ENCODE measurements at regions of chr6 and their contacts with region 1.

Region 1: DNA sequence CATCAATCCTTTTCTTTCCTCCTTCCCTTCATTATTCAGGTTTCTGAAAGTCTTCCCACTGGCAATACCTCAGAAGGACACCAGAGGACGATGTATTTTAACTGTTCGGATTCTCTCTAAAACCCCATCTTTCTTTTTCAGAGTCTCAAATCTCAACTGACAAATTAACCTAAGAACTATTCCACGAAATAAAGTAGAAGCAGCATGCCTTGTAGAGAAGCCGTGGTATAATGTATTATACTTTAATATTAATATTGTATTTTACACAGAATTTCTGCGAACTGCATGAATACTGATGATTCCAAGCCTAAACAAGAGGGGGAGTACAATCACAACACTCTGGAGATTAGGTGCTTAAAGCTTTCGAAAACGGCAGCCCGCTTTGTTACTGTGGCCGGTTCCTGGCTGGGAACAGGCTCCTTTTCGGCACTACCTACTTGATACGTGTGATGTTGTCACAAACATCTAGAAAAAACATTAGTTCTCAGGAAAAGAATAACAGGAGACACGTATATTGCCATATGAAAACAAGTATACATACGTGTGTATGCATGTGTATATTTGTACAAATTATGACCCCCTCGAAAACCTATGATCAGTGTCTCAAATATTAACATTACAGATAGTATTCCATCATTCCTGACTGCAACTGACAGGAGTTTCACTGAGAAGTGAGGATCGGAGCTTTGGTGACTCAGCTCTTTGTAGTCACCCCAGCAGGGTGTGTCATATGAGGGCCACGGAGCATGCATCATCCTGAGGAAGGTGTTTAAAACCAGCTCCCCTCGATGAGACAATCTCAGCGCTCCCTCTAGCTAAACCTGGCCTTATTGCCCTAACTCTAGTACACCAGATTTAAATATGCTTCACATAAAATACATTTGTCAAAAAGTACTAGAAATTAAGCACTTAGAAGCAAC is 319.7 kb upstream of the TCF21 start:
- DNase-seq: peak; percentile 51
- ATAC-seq: peak; percentile 93
- H3K4me3 ChIP-seq: peak overlapping the region in 2 of 3 experiments; percentile 43 to 45; a peak in 4 of 6 replicates
- H3K27ac ChIP-seq: no peak overlapping the region
- H3K4me1 ChIP-seq: peaks cover 8% of the 10 kb centered on the region
- H3K27me3 ChIP-seq: no peaks in the 10 kb centered on the region
- CTCF ChIP-seq: peak; percentile 63
- EP300 ChIP-seq: no peak
- POLR2A ChIP-seq: no peak
- RAD21 ChIP-seq: peak; percentile 38; the same call in 1 of the 2 replicates

Region 2: DNA sequence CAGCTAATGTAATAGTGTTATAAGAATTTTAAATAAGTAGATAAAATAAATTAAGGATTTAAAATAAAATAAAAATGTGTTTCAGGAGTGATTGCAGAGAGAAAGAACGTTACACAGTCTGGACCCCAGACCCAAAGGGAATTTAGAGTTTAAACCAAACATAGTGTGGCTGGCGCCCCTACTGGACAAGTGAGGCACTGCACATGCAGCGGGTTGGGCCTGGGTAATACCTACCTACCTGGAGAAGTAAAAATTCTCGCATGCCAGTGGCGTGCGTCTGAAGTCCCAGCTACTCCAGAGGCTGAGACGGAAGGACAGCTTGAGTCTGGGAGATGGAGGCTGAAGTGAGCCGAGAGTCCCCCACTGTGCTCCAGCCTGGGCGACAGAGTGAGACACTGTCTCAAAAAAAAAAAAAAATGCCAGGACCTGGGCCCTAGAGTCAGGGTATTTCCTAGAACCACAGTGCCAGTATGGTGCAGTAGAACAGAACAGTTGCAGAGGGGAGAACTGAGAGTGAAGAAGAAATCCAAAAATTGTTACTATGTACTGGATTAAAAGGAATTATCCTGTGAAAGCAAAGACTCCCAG is 248.3 kb after region 1 on chr6:
- CTCF ChIA-PET with region 1: interaction called, 10 read pairs
- POLR2A ChIA-PET with region 1: no interaction called
- in situ Hi-C with region 1: no loop called
- intact Hi-C with region 1: loop called (anchors 1 kb)
- DNase-seq: peak; percentile 34
- ATAC-seq: peak; percentile 95
- H3K4me3 ChIP-seq: no peak overlapping the region
- H3K27ac ChIP-seq: no peak overlapping the region
- H3K4me1 ChIP-seq: no peaks in the 10 kb centered on the region
- H3K27me3 ChIP-seq: no peaks in the 10 kb centered on the region
- CTCF ChIP-seq: peak; percentile 68
- EP300 ChIP-seq: no peak
- POLR2A ChIP-seq: no peak
- RAD21 ChIP-seq: no peak

Region 3: DNA sequence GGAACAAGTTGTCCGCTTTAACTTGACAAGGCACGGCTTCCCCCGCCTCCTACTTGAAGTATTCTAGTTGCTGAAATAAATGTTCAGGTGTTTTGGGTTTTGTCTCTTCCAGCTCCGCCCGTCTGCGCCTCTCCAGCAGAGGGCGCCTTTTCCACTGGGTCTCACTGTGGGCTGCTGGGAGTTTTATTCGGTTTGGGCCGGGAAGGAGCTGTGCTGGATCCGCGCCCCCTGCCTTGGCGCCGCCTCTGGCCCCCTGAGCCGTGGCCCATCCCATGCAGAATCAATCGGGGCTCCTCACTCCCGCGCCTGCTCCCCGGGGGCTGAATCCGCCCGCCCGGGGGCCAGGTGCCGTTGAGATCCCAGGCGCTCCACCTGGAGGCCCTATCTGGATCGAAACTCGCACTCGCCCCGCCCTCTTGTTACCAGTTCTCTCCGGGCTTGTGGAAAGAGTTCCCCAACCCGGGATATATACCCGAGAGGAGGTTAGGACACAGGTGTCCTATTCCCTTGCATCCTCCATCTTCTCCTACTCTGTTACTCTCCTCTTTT is 268.6 kb after region 1 on chr6:
- CTCF ChIA-PET with region 1: no interaction called
- POLR2A ChIA-PET with region 1: no interaction called
- in situ Hi-C with region 1: no loop called
- intact Hi-C with region 1: loop called (anchors 1 kb)
- DNase-seq: peak; percentile 56
- ATAC-seq: peak; percentile 99
- H3K4me3 ChIP-seq: peak overlapping the region; percentile 57 to 74 (median 60)
- H3K27ac ChIP-seq: no peak overlapping the region
- H3K4me1 ChIP-seq: no peaks in the 10 kb centered on the region
- H3K27me3 ChIP-seq: no peaks in the 10 kb centered on the region; a peak in 1 of 5 replicates
- CTCF ChIP-seq: peak; percentile 91
- EP300 ChIP-seq: no peak
- POLR2A ChIP-seq: no peak
- RAD21 ChIP-seq: peak; percentile 79

Region 4: DNA sequence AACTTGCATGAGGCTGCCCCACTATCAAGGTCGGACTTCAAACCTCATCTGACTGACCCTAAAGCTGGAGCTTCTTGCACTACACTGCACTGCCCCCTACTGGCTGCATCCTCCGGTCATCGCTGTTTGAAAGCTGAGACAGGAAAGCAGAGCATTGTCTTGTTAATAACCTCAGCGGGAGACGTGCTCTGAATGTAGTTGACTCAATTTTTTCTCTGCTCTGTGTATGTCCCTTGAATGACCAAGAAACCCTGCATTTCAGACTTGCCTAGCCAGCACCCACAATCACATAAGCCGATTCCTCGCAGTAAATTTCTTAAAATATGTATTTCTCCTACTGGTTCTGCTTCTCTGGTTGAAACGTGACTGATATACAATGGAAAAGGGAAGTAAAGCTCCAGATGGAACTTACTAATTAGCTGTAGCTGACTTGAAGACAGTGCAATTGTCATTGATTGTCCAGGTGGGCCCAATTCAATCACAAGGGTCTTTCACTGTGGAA is 347.5 kb after region 1 on chr6:
- CTCF ChIA-PET with region 1: interaction called, 35 read pairs
- POLR2A ChIA-PET with region 1: no interaction called
- in situ Hi-C with region 1: loop called (anchors 5 kb)
- intact Hi-C with region 1: loop called (anchors 1 kb)
- DNase-seq: peak; percentile 75
- ATAC-seq: peak; percentile 96
- H3K4me3 ChIP-seq: no peak overlapping the region
- H3K27ac ChIP-seq: no peak overlapping the region
- H3K4me1 ChIP-seq: no peaks in the 10 kb centered on the region
- H3K27me3 ChIP-seq: no peaks in the 10 kb centered on the region
- CTCF ChIP-seq: peak; percentile 93
- EP300 ChIP-seq: no peak
- POLR2A ChIP-seq: no peak
- RAD21 ChIP-seq: peak; percentile 74; the same call in 1 of the 2 replicates